ENCODE measurements at regions of chr10 and their contacts with region 1.

Region 1: GRCh38 chr10:92901819-92902251 is 53.5 kb downstream of the EXOC6 start:
- DNase-seq: no peak
- H3K4me3 ChIP-seq: no peak overlapping the region
- H3K27ac ChIP-seq: no peak overlapping the region
- H3K4me1 ChIP-seq: no peaks in the 10 kb centered on the region
- H3K27me3 ChIP-seq: no peaks in the 10 kb centered on the region
- CTCF ChIP-seq: no peak

Region 2: DNA sequence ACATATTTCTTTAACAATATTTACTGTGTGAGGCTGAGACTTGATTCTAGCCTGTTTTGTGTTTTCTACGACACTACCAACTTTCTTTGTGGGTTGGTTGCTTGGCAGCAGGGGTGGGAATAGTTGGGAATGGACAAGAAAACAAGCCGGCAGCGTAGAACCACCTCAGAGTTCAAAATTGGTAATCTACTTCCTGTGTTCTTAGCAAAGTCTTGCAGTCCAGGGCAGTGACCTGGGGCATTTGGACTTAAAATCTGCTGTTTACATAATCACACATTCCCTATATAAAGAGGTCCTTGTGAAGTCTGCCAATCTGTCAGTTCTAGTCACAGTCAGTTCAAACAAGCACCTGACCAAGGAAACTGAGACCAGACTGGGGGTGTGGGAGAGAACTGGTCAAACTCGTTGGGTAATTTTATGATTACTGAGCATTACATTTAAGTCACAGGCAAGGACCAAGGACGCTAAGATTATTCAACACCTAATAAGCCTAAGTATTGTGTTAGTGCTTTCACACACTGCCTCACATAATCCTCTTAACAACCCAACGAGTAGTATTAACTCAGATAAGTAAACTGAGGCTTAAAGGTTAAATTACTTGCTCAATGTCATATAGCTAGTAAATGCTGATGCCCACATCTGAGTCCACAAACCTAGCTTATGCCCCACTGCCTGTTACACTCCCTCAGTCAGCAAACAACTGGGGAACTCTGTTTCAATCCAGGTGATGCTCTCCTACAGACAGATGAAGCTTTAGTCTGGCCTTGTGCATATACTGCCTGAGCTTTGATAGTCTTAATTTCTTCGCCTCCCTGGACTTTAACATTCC is 778.7 kb before region 1 on chr10:
- CTCF ChIA-PET with region 1: no interaction called
- POLR2A ChIA-PET with region 1: interaction called, 10 read pairs
- intact Hi-C with region 1: no loop called
- DNase-seq: peak; percentile 43 to 94
- H3K4me3 ChIP-seq: peak overlapping the region; percentile 19; the same call in 1 of the 2 replicates
- H3K27ac ChIP-seq: peak overlapping the region; percentile 78
- H3K4me1 ChIP-seq: peaks cover 54% of the 10 kb centered on the region
- H3K27me3 ChIP-seq: no peaks in the 10 kb centered on the region
- CTCF ChIP-seq: no peak

Region 3: GRCh38 chr10:93068411-93069244 is 166.8 kb after region 1 on chr10:
- CTCF ChIA-PET with region 1: interaction called, 21 read pairs
- POLR2A ChIA-PET with region 1: no interaction called
- intact Hi-C with region 1: no loop called
- DNase-seq: no peak
- H3K4me3 ChIP-seq: no peak overlapping the region
- H3K27ac ChIP-seq: no peak overlapping the region
- H3K4me1 ChIP-seq: peaks cover 23% of the 10 kb centered on the region; the same call in 1 of the 2 replicates
- H3K27me3 ChIP-seq: no peaks in the 10 kb centered on the region
- CTCF ChIP-seq: no peak